Mucosa of descending colon (tissue), 3 donors: ENCODE measurements at regions of chr3 and their contacts with region 1.

Region 1: DNA sequence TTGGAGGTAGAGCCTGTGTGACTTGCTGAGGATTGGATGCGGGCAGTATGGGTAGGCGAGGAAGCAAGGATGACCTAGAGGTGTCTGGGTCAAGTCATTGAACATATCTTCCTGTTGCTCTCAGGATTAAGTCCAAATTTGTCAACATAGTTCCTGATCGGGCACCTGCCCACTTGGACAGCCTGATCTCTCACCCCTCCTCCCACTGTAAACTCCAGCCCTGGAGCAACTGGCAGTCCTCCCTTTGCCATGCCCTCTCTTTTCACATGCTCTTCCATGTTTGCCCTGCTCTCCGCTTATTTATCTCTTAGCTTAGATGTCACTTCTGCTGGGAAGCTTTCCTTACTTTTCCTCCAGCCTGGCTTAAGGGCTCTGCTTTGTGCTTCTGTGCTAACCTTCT is 47.6 kb upstream of the PPP4R2 start:
- DNase-seq: no peak
- ATAC-seq: peak; percentile 10
- H3K4me3 ChIP-seq: no peak overlapping the region
- H3K4me1 ChIP-seq: no peaks in the 10 kb centered on the region
- CTCF ChIP-seq: no peak

Region 2: GRCh38 chr3:72679540-72680198 is 269.3 kb before region 1 on chr3:
- intact Hi-C with region 1: no loop called
- DNase-seq: no peak
- ATAC-seq: no peak
- H3K4me3 ChIP-seq: no peak overlapping the region
- H3K4me1 ChIP-seq: no peaks in the 10 kb centered on the region
- CTCF ChIP-seq: no peak

Region 3: DNA sequence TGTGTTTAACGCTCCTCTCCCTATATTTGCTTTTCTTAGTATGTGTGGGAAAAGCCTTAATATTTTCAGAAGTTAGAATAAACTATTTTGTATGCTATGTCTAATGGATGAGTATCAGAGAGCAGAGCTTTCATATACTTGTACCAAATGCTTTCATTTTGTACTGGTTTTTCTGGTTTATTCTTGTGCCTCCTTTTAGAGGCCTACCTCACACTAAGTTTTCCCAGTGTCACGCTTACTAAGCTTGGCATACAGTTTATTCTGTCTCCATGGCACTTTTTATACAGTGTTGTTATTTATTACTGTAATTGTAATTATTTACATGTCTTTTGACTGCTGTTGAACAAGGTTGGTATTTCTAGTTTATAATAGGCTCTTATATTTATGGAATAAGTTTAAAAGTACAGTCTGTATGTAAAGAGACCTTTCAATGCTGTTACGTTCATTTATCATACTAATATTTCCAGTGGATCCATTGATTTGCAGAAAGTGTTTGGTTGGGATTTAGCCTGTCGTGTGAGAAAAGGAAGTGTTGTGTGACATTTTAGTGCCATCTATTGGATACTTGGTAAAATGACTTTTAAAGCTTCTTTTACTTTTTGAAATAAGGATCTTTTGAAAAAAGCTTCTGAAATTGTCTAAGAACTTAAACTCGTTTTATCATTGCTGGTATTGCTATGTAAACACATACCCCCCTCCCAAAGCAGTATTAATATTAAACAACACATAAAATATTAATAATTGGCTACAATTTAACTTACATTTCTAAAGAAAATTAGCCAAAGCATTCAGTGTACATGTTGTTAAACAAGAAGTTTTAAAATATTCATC is 107.2 kb after region 1 on chr3:
- intact Hi-C with region 1: loop called in 1 of 2 experiments (anchors 10 kb)
- DNase-seq: no peak
- ATAC-seq: peak; percentile 52
- H3K4me3 ChIP-seq: no peak overlapping the region
- H3K4me1 ChIP-seq: peaks cover 23% of the 10 kb centered on the region
- CTCF ChIP-seq: peak; percentile 11

Region 4: GRCh38 chr3:73143821-73144237 is 194.8 kb after region 1 on chr3:
- intact Hi-C with region 1: no loop called
- DNase-seq: no peak
- ATAC-seq: peak; percentile 27
- H3K4me3 ChIP-seq: no peak overlapping the region
- H3K4me1 ChIP-seq: no peaks in the 10 kb centered on the region
- CTCF ChIP-seq: no peak